Ascending aorta (tissue), 2 donors: ENCODE measurements at regions of chr10 and their contacts with region 1.

Region 1: DNA sequence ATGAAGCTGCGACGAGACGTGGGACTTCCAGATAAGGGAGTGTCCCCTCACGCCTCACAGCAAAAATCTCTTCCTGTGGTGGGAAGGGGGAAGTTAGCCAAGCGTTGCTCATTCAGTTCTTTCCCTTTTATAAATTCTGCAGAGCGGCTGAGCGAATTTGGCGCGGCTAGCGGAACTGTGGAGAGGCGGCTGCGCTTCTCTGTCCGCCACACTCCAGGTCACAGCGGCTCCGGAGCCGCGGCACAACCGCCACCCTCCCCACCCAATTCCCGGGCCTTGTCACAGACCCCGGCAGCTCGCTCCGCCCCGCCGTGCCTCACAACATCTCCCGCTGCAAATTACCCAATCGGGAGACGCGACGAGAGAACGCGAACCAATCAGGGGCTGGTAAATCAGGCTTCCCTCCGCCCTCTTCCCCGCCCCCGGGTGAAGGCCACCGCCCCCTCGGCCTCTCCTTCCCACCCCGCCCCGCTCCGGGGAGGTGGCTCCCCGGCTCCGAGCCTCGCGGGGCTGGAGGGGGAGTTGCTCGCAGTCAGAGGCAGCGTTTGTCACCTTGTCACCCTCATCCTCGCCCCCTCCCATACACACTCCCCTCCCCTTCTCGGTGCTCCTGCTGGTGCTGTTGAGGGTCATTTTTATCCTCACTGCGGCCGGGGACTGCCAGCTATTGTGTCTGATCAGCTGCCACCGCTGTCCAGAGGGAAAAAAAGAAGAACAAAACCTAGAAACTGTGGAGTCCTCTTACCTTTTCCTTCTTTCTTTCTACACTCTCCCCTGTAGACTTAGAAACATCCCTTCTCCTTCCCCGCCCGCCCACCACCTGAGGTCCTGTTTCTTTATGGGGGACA is 918 bp upstream of the ARHGAP21 start:
- DNase-seq: peak; percentile 94 to 99
- H3K4me3 ChIP-seq: peak overlapping the region; percentile 75 to 83
- H3K27ac ChIP-seq: peak overlapping the region; percentile 92 to 97
- H3K4me1 ChIP-seq: peaks cover 0 to 6% of the 10 kb centered on the region in 2 donors
- H3K27me3 ChIP-seq: no peaks in the 10 kb centered on the region
- CTCF ChIP-seq: no peak

Region 2: GRCh38 chr10:23438550-23439441 is 1285.8 kb before region 1 on chr10 and contains the start of gene OTUD1:
- intact Hi-C with region 1: loop called (anchors 5 kb)
- DNase-seq: peak; percentile 82 to 98
- H3K4me3 ChIP-seq: peak within 1 kb of the TSS; percentile 91 to 96
- H3K27ac ChIP-seq: peak within 1 kb of the TSS; percentile 88 to 93
- H3K4me1 ChIP-seq: peaks cover 0 to 24% of the 10 kb centered on the region in 2 donors
- H3K27me3 ChIP-seq: no peaks in the 10 kb centered on the region
- CTCF ChIP-seq: peak in 1 of 3 experiments; percentile 26
- total RNA-seq, gene OTUD1: 24.1 TPM

Region 3: DNA sequence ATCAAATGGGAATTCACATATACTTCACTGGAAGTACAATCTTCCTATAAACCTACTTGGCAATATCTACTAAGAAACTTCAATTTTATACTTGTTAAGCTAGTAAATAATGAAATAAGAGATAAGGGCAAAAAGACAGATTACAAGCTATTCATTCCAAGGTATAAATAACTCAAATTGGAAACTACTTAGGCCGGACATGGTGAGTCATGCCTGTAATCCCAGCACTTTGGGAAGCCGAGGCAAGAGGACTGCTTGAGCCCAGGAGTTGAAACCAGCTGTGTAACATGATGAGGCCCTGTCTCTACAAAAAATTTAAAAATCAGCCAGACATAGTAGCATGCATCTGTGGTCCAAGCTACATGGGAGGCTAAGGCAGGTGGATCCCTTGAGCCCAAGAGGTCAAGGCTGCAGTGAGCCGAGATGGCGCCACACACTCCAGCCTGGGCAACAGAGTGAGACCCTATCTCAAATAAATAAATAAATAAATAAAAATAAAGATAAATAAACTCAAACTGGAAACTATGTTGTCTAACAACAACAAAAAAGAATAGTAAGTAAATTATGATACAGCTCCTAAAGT is 38.6 kb before region 1 on chr10:
- intact Hi-C with region 1: loop called (anchors 5 kb)
- DNase-seq: no peak
- H3K4me3 ChIP-seq: no peak overlapping the region
- H3K27ac ChIP-seq: peak overlapping the region; percentile 30 to 52
- H3K4me1 ChIP-seq: peaks cover 0 to 21% of the 10 kb centered on the region in 2 donors
- H3K27me3 ChIP-seq: no peaks in the 10 kb centered on the region
- CTCF ChIP-seq: no peak

Region 4: GRCh38 chr10:24989867-24990266 is 265.3 kb after region 1 on chr10:
- intact Hi-C with region 1: loop called (anchors 10 kb)
- DNase-seq: no peak
- H3K4me3 ChIP-seq: no peak overlapping the region
- H3K27ac ChIP-seq: no peak overlapping the region
- H3K4me1 ChIP-seq: no peaks in the 10 kb centered on the region
- H3K27me3 ChIP-seq: no peaks in the 10 kb centered on the region
- CTCF ChIP-seq: peak; percentile 21 to 59 (median 26)

Region 5: DNA sequence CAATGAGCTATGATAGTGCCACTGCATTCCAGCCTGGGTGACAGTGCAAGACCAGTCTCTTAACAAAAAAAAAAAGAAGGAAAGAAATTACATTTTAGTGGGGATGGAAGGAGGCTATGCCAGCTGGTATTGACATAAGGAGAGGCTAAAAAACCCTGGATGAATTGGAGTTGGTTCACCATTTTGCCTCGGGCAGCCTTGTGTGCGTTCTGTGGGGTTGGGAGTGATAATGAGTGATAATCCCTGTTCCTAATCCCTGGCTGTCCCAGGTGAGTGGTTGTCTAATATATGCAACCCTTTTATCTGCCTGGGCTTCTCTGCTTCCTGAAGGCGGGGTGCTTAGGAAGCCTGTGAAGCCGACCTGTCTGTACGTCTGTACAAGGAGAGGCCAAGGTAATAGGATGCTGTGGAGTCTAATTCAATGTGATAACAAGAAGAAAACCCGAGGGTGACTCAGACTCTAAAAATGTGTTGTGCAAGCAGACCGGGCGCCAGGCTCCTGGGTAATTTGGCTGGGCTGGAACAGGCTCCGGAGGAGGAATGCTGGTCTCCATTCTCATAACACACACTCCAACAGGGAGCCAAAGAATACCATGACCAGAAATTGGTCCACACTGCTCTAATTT is 335.3 kb after region 1 on chr10:
- intact Hi-C with region 1: loop called (anchors 5 kb)
- DNase-seq: peak; percentile 47 to 91
- H3K4me3 ChIP-seq: no peak overlapping the region
- H3K27ac ChIP-seq: peak overlapping the region; percentile 7 to 43
- H3K4me1 ChIP-seq: peaks cover 2 to 28% of the 10 kb centered on the region in 2 donors
- H3K27me3 ChIP-seq: no peaks in the 10 kb centered on the region
- CTCF ChIP-seq: no peak